Sigmoid colon (tissue), 7 donors: ENCODE measurements at regions of chr3 and their contacts with region 1.

Region 1: GRCh38 chr3:48429317-48429959 is 448 bp downstream of the PLXNB1 start:
- DNase-seq: peak; percentile 86
- H3K4me3 ChIP-seq: peak overlapping the region; percentile 63 to 93 (median 76)
- H3K27ac ChIP-seq: peak overlapping the region; percentile 92 to 96 (median 93)
- H3K4me1 ChIP-seq: peaks cover 0 to 63% (median 59%) of the 10 kb centered on the region in 4 donors
- H3K27me3 ChIP-seq: no peaks in the 10 kb centered on the region
- CTCF ChIP-seq: no peak
- EP300 ChIP-seq: no peak
- POLR2A ChIP-seq: no peak

Region 2: GRCh38 chr3:48400824-48401433 is 28.5 kb before region 1 on chr3:
- intact Hi-C with region 1: loop called (anchors 2 kb)
- DNase-seq: peak; percentile 85
- H3K4me3 ChIP-seq: no peak overlapping the region
- H3K27ac ChIP-seq: peak overlapping the region; percentile 88 to 96 (median 89)
- H3K4me1 ChIP-seq: peaks cover 0 to 28% (median 23%) of the 10 kb centered on the region in 4 donors
- H3K27me3 ChIP-seq: no peaks in the 10 kb centered on the region
- CTCF ChIP-seq: peak; percentile 83 to 96 (median 86)
- EP300 ChIP-seq: no peak
- POLR2A ChIP-seq: no peak

Region 3: DNA sequence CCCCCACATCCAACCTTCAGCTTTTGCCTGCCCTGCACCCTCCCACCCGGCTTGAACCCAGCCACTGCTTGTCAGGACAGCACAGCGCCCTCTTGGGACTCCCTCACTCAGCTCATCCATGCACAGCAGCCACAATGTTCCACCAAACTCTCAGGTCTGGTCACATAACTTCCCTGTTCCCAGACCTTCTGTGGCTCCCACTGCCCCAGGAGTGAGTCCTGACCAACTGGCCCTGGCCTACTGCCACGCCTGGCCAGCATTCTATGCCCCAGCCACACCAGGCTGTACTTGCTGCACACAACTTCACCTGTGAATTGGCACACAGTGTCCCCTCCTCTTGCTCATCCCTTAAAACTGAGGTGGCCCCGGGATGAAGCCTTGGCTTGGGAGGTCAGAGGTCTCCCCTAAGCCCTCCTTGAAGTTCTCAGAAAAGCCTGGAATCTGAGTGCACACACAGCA is 20.6 kb before region 1 on chr3:
- intact Hi-C with region 1: loop called (anchors 2 kb)
- DNase-seq: peak; percentile 53
- H3K4me3 ChIP-seq: no peak overlapping the region
- H3K27ac ChIP-seq: peak overlapping the region; percentile 3 to 89 (median 28)
- H3K4me1 ChIP-seq: peaks cover 0 to 15% (median 5%) of the 10 kb centered on the region in 4 donors
- H3K27me3 ChIP-seq: no peaks in the 10 kb centered on the region
- CTCF ChIP-seq: no peak
- EP300 ChIP-seq: no peak
- POLR2A ChIP-seq: no peak